ENCODE measurements at regions of chr10 and their contacts with region 1.

Region 1: DNA sequence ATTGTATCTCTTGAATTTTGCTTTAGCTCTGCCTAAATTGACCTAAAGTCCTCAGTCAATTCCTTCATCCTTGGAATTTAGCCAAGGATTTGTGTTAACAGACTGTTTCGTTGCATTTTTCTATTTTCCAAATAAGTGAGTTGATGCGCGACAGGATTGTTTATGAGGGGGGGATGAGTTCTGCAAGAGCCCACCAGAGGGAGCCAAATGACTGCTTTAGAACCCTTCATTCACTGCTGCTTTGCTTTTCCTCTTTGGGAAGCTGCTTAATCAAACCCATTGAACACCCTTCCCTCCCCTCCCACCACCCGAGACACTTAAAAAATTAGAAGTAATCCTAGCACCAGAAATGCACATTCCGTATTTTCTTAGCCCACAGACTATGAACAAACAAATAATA is 33.7 kb upstream of the PTF1A start:
- H3K4me3 Mint-ChIP-seq: no peak overlapping the region
- H3K27ac Mint-ChIP-seq: no peak overlapping the region
- H3K4me1 Mint-ChIP-seq: no peaks in the 10 kb centered on the region
- H3K27me3 Mint-ChIP-seq: peaks cover 19% of the 10 kb centered on the region

Region 2: DNA sequence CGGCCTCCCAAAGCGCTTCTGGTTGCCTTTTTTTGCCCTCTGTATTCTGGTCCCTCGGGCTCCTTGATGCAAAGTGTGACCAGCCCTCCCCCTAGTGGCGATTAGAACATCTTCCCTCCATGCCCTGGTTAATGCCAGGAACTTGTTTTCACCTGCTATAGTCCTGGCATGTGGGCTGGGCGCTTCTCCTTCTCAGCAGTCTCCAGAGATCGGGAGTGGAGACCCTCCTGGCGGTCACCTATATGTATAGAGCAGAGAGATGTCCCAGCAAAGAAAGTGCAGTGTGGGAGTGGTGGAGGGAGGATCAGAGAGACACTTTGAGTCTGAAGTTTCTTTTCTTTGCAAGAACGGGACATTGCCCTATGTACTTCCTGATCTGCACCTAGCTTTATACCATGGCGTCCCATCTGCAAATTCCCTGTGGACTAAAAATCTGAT is 544.6 kb after region 1 on chr10:
- intact Hi-C with region 1: loop called (anchors 2 kb)
- H3K4me3 Mint-ChIP-seq: no peak overlapping the region
- H3K27ac Mint-ChIP-seq: no peak overlapping the region
- H3K4me1 Mint-ChIP-seq: peaks cover 4% of the 10 kb centered on the region
- H3K27me3 Mint-ChIP-seq: peaks cover 12% of the 10 kb centered on the region

Region 3: GRCh38 chr10:24197263-24197662 is 1038.9 kb after region 1 on chr10:
- intact Hi-C with region 1: loop called (anchors 2 kb)
- H3K4me3 Mint-ChIP-seq: no peak overlapping the region
- H3K27ac Mint-ChIP-seq: no peak overlapping the region
- H3K4me1 Mint-ChIP-seq: no peaks in the 10 kb centered on the region
- H3K27me3 Mint-ChIP-seq: no peaks in the 10 kb centered on the region

Region 4: DNA sequence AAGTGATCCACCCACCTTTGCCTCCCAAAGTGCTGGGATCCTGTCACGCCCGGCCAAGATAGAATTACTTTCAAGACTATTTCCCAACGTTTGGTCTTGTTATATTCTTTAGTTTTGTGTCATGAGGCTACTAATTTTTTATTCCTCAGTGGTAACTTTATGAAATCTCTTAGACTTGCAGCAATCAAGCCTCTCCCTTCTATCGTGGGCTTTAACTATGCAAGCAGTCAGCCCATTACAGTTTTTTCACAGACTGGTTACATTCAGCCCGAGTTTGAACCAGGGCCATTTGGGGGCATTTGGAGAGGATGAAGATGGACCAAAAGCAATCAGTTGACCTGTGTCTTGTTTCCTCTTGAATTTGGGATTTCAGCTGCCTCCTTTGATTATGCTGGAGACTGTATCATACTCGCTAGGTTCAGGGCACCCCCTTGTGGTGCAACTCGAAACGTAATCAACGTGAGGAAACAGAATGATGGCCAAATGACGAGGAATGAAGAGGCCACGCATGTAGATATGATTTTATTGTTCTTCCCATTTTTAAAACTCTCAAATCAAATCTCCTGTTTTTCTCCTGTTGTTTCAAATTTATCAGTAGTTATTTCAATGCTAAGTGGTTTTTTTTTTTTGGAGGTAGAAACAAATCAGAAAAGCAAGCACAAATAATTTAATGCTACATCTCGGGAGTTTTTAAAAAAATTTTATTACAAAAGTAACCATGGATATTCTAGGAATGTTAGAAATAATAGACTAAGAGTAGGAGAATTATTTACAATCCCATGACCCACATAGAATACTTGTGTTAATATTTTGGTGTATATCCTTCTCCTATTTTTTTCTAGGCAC is 1202.1 kb after region 1 on chr10:
- intact Hi-C with region 1: loop called (anchors 5 kb)
- H3K4me3 Mint-ChIP-seq: no peak overlapping the region
- H3K27ac Mint-ChIP-seq: no peak overlapping the region
- H3K4me1 Mint-ChIP-seq: no peaks in the 10 kb centered on the region
- H3K27me3 Mint-ChIP-seq: no peaks in the 10 kb centered on the region

Region 5: GRCh38 chr10:24518981-24519597 is 1360.7 kb after region 1 on chr10:
- intact Hi-C with region 1: loop called (anchors 5 kb)
- H3K4me3 Mint-ChIP-seq: no peak overlapping the region
- H3K27ac Mint-ChIP-seq: no peak overlapping the region
- H3K4me1 Mint-ChIP-seq: no peaks in the 10 kb centered on the region
- H3K27me3 Mint-ChIP-seq: peaks cover 8% of the 10 kb centered on the region